Caco-2 (cell line): ENCODE measurements at regions of chr14 and their contacts with region 1.

Region 1: GRCh38 chr14:32252030-32252670 is 49.1 kb upstream of the RNU6-8 start:
- DNase-seq: peak; percentile 65 to 78
- H3K4me3 ChIP-seq: no peak overlapping the region
- H3K4me3 Mint-ChIP-seq: no peak overlapping the region
- H3K27ac Mint-ChIP-seq: no peak overlapping the region
- H3K4me1 ChIP-seq: peaks cover 5% of the 10 kb centered on the region
- H3K4me1 Mint-ChIP-seq: no peaks in the 10 kb centered on the region
- H3K27me3 ChIP-seq: no peaks in the 10 kb centered on the region
- H3K27me3 Mint-ChIP-seq: no peaks in the 10 kb centered on the region
- CTCF ChIP-seq: peak; percentile 60 to 85

Region 2: DNA sequence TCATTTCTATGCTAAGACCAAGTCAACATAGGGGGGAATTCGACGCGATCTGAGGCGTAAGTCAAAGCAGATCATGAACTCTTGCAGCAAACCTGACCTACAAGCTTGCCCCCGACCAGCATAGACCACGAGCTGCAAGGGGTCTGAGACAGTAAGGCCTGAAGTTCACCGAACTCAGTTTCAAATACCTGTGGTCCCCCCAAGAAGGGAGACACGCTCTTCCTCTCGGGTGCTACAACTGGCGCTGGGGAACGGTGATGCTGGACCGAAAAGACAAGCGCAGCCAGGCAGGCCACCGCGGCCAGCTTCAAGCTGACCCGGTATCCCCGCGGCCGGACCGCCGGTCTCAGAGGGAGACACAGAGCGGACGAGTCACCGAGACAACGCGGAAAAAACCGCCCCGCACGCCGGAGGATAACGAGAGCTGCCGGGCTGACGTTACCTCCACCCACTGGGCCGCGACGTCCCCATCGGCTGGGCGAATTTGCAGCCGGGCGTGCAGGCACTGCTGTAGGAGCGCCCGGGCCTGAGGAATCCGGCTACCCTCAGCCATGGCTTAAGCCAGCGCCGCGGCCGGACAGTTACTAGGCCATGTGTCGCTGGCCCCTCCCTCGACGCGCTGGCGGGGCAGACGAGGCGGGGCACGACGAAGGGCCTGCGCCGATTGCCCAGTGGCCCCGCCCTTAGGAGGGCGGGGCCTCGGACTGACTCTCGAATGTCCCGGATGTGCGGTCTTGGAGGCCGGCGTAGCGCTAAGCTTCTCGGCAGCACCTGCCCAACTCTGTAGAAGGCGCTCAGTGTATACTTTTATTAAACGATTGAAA is 795.1 kb before region 1 on chr14 and contains the start of gene DTD2:
- CTCF ChIA-PET with region 1: no interaction called
- POLR2A ChIA-PET with region 1: no interaction called
- intact Hi-C with region 1: loop called (anchors 10 kb)
- DNase-seq: peak; percentile 94 to 95
- H3K4me3 ChIP-seq: peak within 1 kb of the TSS; percentile 60
- H3K4me3 Mint-ChIP-seq: peak within 1 kb of the TSS; percentile 92
- H3K27ac Mint-ChIP-seq: peak within 1 kb of the TSS; percentile 97
- H3K4me1 ChIP-seq: peaks cover 13% of the 10 kb centered on the region
- H3K4me1 Mint-ChIP-seq: peaks cover 25% of the 10 kb centered on the region
- H3K27me3 ChIP-seq: no peaks in the 10 kb centered on the region
- H3K27me3 Mint-ChIP-seq: no peaks in the 10 kb centered on the region
- CTCF ChIP-seq: no peak
- total RNA-seq, gene DTD2: 16.5 and 20.0 TPM in 2 replicates

Region 3: DNA sequence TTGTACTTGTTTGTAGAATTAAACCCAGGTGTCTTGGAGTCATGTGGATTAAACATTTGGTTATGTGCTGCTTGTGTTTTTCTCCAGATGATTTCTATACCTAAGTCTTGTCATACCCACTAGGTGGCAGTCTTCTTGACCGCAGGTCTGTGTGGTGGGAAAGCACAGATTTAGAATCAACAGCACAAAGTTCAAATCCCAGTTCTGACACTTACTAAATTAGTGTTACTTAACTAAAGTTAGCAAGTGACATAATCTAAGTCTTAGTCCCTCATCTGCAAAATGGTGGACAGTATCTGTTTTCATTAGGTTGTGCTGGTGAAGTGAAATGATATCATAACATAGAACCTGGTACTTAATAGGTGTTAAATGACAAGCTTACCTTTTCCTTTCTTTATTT is 326.0 kb before region 1 on chr14:
- CTCF ChIA-PET with region 1: no interaction called
- POLR2A ChIA-PET with region 1: no interaction called
- intact Hi-C with region 1: loop called (anchors 2 kb)
- DNase-seq: no peak
- H3K4me3 ChIP-seq: no peak overlapping the region
- H3K4me3 Mint-ChIP-seq: no peak overlapping the region
- H3K27ac Mint-ChIP-seq: no peak overlapping the region
- H3K4me1 ChIP-seq: peaks cover 9% of the 10 kb centered on the region; the same call in 1 of the 2 replicates
- H3K4me1 Mint-ChIP-seq: no peaks in the 10 kb centered on the region
- H3K27me3 ChIP-seq: no peaks in the 10 kb centered on the region
- H3K27me3 Mint-ChIP-seq: no peaks in the 10 kb centered on the region
- CTCF ChIP-seq: peak; percentile 34 to 44

Region 4: GRCh38 chr14:32076278-32077080 is 175.7 kb before region 1 on chr14:
- CTCF ChIA-PET with region 1: interaction called, 9 read pairs
- POLR2A ChIA-PET with region 1: no interaction called
- intact Hi-C with region 1: loop called (anchors 1 kb)
- DNase-seq: peak; percentile 97
- H3K4me3 ChIP-seq: peak overlapping the region; percentile 72
- H3K4me3 Mint-ChIP-seq: peak overlapping the region; percentile 87
- H3K27ac Mint-ChIP-seq: peak overlapping the region; percentile 77
- H3K4me1 ChIP-seq: peaks cover 34% of the 10 kb centered on the region
- H3K4me1 Mint-ChIP-seq: peaks cover 27% of the 10 kb centered on the region
- H3K27me3 ChIP-seq: no peaks in the 10 kb centered on the region
- H3K27me3 Mint-ChIP-seq: no peaks in the 10 kb centered on the region
- CTCF ChIP-seq: no peak

Region 5: GRCh38 chr14:32190672-32191071 is 61.5 kb before region 1 on chr14:
- CTCF ChIA-PET with region 1: no interaction called
- POLR2A ChIA-PET with region 1: no interaction called
- intact Hi-C with region 1: no loop called
- DNase-seq: no peak
- H3K4me3 ChIP-seq: no peak overlapping the region
- H3K4me3 Mint-ChIP-seq: no peak overlapping the region
- H3K27ac Mint-ChIP-seq: no peak overlapping the region
- H3K4me1 ChIP-seq: no peaks in the 10 kb centered on the region
- H3K4me1 Mint-ChIP-seq: peaks cover 6% of the 10 kb centered on the region
- H3K27me3 ChIP-seq: no peaks in the 10 kb centered on the region
- H3K27me3 Mint-ChIP-seq: no peaks in the 10 kb centered on the region
- CTCF ChIP-seq: no peak

Region 6: GRCh38 chr14:32202998-32203882 is 48.9 kb before region 1 on chr14 and contains the start of gene RNU6-8:
- CTCF ChIA-PET with region 1: interaction called, 4 read pairs
- POLR2A ChIA-PET with region 1: no interaction called
- intact Hi-C with region 1: loop called (anchors 1 kb)
- DNase-seq: peak; percentile 95
- H3K4me3 ChIP-seq: peak within 1 kb of the TSS; percentile 76
- H3K4me3 Mint-ChIP-seq: peak within 1 kb of the TSS; percentile 90
- H3K27ac Mint-ChIP-seq: peak within 1 kb of the TSS; percentile 98
- H3K4me1 ChIP-seq: 0 out of 2 replicates have a peak, but pooled peaks cover 5% of the 10 kb centered on the region
- H3K4me1 Mint-ChIP-seq: no peaks in the 10 kb centered on the region
- H3K27me3 ChIP-seq: no peaks in the 10 kb centered on the region
- H3K27me3 Mint-ChIP-seq: no peaks in the 10 kb centered on the region
- CTCF ChIP-seq: no peak
- total RNA-seq, gene RNU6-8: not detected in 2 replicates

Region 7: DNA sequence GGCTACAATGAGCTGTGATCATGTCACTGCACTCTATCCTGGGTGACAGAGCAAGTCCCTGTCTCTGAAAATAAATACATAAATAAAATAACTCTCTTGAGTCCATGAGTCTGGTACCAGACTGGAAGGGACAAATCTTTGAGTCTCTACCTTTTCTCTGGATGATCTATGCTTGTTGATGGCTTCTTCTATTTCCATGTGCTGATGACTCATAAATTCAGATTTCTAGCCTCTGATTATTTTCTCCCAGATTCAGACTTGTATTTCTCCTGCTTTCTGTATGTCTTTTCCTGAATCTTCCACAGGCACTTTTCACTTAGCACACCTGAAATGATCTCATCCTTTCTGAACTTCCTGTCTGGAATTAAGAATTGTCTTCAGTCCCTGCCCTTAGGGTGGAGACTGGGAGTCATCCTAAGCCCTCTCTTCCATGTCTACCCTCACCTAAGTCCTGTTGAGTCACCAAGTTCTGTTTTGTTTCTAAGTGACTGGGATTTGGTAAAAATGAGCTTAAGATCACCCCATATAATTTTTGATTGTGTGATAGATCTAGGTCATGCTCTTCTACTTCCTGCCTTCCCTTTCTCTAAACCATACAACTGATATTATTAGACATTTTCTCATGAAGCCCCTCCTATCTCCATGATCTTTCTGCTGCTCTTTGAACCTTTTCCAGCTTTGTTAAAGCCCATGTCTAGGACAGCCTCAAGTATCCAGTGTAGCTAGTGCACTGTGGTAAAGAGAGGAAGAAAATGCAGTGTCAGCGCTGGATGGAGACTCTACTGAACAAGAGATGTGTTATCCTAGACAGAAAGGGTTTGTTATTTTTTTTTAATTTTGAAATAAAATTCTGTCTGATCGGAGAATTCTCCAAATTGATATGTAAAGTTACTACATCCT is 90.0 kb after region 1 on chr14:
- CTCF ChIA-PET with region 1: no interaction called
- POLR2A ChIA-PET with region 1: no interaction called
- intact Hi-C with region 1: no loop called
- DNase-seq: no peak
- H3K4me3 ChIP-seq: no peak overlapping the region
- H3K4me3 Mint-ChIP-seq: no peak overlapping the region
- H3K27ac Mint-ChIP-seq: no peak overlapping the region
- H3K4me1 ChIP-seq: 0 out of 2 replicates have a peak, but pooled peaks cover 4% of the 10 kb centered on the region
- H3K4me1 Mint-ChIP-seq: peaks cover 7% of the 10 kb centered on the region
- H3K27me3 ChIP-seq: no peaks in the 10 kb centered on the region
- H3K27me3 Mint-ChIP-seq: no peaks in the 10 kb centered on the region
- CTCF ChIP-seq: no peak

Region 8: DNA sequence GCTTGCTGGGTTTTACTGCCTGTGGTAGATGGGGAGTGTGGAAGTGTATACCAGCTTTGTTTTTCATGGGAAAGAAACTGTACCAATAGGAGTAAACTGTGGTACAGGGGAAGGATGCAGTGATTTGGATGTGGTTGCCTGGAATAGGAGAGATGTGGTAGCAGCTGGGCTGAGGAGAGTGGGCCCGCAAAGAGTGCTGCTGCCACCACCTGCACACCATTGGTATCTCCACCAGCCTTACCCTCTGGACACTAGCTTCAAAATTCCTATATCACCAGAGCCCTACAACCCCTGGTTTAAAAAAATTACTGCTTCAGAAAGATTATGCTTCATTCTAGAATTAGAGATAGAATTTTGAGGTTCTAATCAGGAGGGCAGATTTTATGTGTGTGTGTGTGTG is 130.6 kb after region 1 on chr14:
- CTCF ChIA-PET with region 1: interaction called, 21 read pairs
- POLR2A ChIA-PET with region 1: no interaction called
- intact Hi-C with region 1: loop called (anchors 1 kb)
- DNase-seq: peak in 1 of 2 experiments; percentile 54
- H3K4me3 ChIP-seq: no peak overlapping the region
- H3K4me3 Mint-ChIP-seq: no peak overlapping the region
- H3K27ac Mint-ChIP-seq: no peak overlapping the region
- H3K4me1 ChIP-seq: peaks cover 64% of the 10 kb centered on the region
- H3K4me1 Mint-ChIP-seq: peaks cover 51% of the 10 kb centered on the region
- H3K27me3 ChIP-seq: no peaks in the 10 kb centered on the region
- H3K27me3 Mint-ChIP-seq: no peaks in the 10 kb centered on the region
- CTCF ChIP-seq: peak; percentile 23 to 63

Region 9: GRCh38 chr14:32560209-32560857 is 308.2 kb after region 1 on chr14:
- CTCF ChIA-PET with region 1: interaction called, 18 read pairs
- POLR2A ChIA-PET with region 1: no interaction called
- intact Hi-C with region 1: loop called (anchors 1 kb)
- DNase-seq: peak; percentile 59 to 71
- H3K4me3 ChIP-seq: no peak overlapping the region
- H3K4me3 Mint-ChIP-seq: no peak overlapping the region
- H3K27ac Mint-ChIP-seq: no peak overlapping the region
- H3K4me1 ChIP-seq: peaks cover 16% of the 10 kb centered on the region
- H3K4me1 Mint-ChIP-seq: no peaks in the 10 kb centered on the region
- H3K27me3 ChIP-seq: no peaks in the 10 kb centered on the region
- H3K27me3 Mint-ChIP-seq: no peaks in the 10 kb centered on the region
- CTCF ChIP-seq: peak; percentile 77 to 79